ACHN (cell line): ENCODE measurements at regions of chr6 and their contacts with region 1.

Region 1: DNA sequence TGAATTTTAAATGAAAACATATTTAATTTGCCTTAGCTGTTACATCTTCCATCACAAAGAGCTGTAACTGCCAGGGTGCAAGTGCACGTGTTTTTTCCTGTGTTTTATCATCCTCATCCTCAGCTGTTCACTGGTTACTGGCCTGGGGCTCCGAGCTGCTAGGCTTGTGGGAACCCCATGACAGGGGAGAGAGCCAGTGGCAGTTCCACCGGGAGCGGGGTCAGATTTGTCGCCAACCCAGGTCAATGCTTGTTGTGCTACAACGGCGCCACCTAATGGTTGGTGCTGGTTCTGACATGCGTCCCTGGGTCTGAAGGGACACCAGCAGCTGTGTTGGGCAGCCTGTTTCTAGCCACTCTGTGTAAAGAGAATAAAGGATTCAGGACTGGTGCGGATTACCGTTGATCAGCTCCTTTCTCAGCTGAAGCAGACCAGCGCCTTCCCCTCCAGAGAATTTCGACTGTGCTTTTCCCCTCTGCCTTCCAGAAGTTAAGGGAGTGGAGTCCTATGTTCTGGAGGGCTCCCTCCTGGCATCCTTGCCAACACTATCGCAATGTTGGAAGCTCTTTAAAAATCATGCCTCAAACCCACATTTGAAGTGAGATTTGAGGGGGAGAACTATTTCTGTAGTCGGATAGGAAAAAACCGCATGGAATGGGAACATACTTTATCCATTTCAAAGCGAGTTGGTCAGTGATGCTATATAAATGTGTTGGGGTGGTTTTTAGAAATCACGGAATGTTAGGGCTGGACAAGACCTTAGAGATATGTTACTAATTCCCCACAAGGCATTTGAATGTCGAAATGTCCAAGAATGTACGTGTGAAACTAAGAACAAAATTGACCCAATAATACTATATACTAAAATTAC is 32.1 kb downstream of the SUMO4 start:
- DNase-seq: peak; percentile 70

Region 2: GRCh38 chr6:149082286-149082707 is 349.8 kb before region 1 on chr6:
- in situ Hi-C with region 1: loop called (anchors 25 kb)
- DNase-seq: peak; percentile 54

Region 3: DNA sequence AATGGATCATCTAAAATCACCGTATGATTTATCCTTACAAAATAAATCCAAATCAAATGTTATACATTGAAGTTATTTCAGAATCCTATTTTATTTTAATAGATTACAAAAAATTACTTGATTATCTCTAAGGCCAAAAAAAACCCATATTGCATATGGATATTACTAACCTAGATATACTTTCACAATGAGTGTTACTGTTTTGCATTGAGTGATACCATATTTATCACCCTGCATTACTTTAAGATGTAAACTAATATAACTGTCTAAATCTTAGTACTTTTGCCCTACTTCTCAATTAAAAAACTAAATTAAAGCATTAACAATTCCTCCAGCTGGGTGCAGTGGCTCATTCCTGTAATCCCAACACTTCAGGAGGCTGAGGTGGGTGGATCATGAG is 102.6 kb after region 1 on chr6:
- in situ Hi-C with region 1: no loop called
- DNase-seq: no peak